Posterior vena cava (tissue), 2 donors: ENCODE measurements at regions of chr10 and their contacts with region 1.

Region 1: GRCh38 chr10:100586959-100587358 is 51.2 kb downstream of the HIF1AN start:
- DNase-seq: no peak

Region 2: GRCh38 chr10:100291356-100291755 is 295.6 kb before region 1 on chr10:
- intact Hi-C with region 1: no loop called
- DNase-seq: no peak

Region 3: DNA sequence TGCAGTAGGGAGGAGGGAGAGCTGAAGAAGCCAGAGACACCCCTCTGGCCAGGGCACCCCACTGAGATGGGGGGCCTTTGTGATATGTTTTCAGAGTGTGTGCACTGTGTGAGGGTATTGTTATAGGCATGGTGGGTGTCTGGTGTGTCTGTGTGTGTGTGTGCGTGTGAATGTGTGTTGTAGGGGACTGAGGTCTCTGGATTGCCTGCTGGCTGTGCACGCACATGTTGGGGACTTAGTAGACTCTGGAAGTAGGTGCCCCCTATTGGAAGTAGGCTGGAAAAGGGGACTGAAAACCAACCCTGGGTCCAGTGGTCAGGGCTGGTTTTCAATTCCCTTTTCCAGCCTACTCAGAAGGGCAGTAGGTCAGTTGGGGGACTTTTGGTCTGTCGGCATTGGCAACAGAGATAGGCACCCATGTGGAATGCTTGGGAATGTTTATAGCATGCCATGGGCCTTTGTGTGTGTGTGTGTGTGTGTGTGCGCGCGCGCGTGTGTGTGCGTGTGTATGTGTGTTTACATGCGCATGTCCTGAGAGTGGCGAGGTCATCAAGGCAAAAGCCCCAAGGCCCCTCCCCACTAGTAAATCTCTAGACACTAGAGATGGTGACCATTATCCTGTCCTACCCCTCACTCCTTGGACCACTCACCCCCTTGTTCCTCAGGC is 27.6 kb after region 1 on chr10:
- intact Hi-C with region 1: loop called in 1 of 2 experiments (anchors 1 kb)
- DNase-seq: no peak